Prostate gland (tissue), 2 donors: ENCODE measurements at regions of chr4 and their contacts with region 1.

Region 1: DNA sequence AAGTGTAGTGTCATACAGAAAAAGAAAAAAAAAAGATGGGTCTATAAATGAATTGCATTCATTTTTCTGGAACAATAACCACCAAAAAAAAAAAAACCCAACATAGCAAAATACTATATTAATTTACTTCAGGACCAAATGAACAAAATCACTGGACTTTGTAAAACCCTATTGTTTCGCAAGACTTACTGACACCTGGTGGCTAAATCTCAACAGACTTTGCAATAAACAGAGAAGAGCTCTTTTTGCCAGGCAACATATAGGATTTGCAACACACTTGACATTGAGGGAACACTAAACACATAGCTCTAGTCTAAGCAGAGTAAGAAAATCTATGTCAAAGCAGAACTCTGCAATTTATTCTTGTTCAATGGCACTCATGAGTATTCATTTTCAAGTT is 990.2 kb downstream of the STPG2 start:
- DNase-seq: no peak
- H3K4me3 ChIP-seq: no peak overlapping the region
- H3K27ac ChIP-seq: no peak overlapping the region
- H3K4me1 ChIP-seq: no peaks in the 10 kb centered on the region
- H3K27me3 ChIP-seq: no peaks in the 10 kb centered on the region
- CTCF ChIP-seq: peak in 2 of 4 experiments; percentile 39 to 44
- POLR2A ChIP-seq: no peak

Region 2: DNA sequence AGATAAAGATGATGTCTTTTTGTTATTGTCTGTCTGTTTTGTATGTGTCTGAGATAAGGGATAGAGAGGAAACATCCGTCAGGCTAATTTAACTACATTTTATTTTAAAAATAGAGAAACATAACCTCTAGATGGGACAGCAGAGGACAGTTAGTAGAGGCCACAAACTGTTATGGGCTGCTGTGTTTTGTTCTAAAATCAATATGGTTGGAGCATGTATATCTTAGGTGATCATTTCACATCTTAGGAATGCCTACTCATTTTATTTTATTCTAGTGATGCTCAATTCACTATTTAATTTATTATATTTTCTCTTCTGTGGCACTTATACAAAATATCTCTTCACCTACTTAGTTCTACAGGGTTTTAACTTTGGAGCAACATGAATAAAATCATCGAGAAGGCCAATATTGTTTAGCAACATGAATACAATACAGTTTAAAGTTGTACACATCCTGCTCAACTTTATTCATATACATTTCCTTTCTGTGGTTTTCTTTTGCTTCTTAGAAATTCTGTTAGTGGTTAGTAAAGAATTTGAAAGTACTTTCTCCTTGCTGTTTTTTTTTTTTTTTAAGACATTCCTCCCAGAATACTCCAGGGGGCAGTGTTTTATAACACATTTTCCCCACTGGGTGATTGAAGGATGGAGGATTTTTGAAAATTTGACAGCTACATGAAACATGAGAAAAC is 1997.1 kb before region 1 on chr4:
- intact Hi-C with region 1: loop called (anchors 10 kb)
- DNase-seq: no peak
- H3K4me3 ChIP-seq: no peak overlapping the region
- H3K27ac ChIP-seq: no peak overlapping the region
- H3K4me1 ChIP-seq: no peaks in the 10 kb centered on the region
- H3K27me3 ChIP-seq: no peaks in the 10 kb centered on the region
- CTCF ChIP-seq: peak; percentile 13 to 44 (median 35)
- POLR2A ChIP-seq: no peak

Region 3: DNA sequence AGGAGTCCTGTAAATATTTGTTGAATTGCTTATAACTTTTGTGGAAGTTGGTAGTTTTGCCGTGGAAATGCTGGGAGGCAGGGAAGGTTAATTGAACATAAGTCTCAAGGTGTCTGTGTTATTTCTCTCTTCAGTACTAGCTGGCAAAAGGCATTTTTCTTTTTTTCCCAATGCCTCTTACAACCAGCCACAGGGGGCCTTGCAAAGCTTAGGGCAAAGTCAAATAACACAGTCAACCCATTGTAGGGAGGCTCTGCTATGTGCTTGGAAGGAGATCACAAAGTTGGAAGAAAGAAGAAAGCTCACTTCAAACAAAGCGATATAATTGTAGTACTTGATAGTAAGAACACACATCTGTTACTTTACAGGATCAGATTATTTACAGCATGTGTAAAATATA is 510.6 kb before region 1 on chr4:
- intact Hi-C with region 1: no loop called
- DNase-seq: no peak
- H3K4me3 ChIP-seq: no peak overlapping the region
- H3K27ac ChIP-seq: no peak overlapping the region
- H3K4me1 ChIP-seq: no peaks in the 10 kb centered on the region
- H3K27me3 ChIP-seq: no peaks in the 10 kb centered on the region
- CTCF ChIP-seq: no peak
- POLR2A ChIP-seq: no peak

Region 4: DNA sequence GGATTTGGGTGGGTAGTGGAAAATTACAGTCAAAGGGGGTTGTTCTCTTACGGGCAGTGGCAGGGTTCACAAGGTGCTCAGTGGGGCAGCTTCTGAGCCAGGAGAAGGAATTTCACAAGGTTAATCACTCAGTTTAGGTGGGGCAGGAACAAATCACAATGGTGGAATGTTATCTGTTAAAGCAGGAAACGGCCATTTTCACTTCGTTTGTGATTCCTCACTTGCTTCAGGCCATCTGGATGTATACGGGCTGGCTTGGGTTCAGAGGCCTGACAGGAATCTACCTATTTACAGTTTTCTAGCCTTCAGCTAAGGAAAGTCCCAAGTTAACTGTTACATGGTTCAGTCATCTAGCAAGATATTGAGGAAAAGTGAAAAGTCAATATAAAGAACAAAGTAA is 13.2 kb before region 1 on chr4:
- intact Hi-C with region 1: no loop called
- DNase-seq: no peak
- H3K4me3 ChIP-seq: no peak overlapping the region
- H3K27ac ChIP-seq: no peak overlapping the region
- H3K4me1 ChIP-seq: no peaks in the 10 kb centered on the region
- H3K27me3 ChIP-seq: no peaks in the 10 kb centered on the region
- CTCF ChIP-seq: no peak
- POLR2A ChIP-seq: no peak